CD8-positive, alpha-beta memory T cell (primary cell): ENCODE measurements at regions of chr20 and their contacts with region 1.

Region 1: DNA sequence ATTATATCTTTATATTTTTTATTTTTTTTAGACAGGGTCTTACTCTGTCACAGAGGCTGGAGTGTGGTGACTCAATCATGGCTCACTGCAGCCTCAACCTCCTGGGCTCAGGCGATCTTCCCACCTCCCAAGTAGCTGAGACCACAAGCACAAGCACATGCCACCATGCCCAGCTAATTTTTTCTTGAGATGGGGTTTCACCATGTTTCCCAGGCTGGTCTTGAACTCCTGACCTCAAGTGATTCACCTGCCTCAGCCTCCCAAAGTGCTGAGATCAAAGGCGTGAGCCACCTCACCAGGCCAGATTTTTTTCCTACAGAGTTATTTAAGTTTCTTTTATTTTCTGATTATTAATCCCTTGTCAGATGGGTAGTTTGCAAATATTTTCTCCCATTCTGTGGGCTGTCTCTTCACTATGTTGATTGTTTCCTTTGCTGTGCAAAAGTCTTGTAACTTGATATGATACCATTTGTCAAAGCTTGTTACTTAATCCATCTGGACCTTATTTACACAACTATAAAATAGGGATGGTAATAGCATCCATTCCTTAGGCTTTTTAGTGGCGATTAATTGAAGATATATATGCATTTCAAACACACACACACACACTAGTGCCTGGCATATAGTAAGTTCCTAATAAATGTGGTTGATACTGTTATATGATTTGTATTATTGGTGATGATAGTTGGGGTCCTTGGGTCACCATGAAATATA is 187.1 kb downstream of the BCAS1 start:
- DNase-seq: no peak
- H3K4me3 ChIP-seq: no peak overlapping the region
- H3K4me3 Mint-ChIP-seq: no peak overlapping the region
- H3K27ac ChIP-seq: no peak overlapping the region
- H3K27ac Mint-ChIP-seq: peak overlapping the region in 3 of 8 donors; percentile 7 to 54 (median 14)
- H3K4me1 ChIP-seq: peaks cover 16% of the 10 kb centered on the region
- H3K4me1 Mint-ChIP-seq: peaks cover 15 to 66% (median 60%) of the 10 kb centered on the region in 3 donors
- H3K27me3 ChIP-seq: no peaks in the 10 kb centered on the region
- H3K27me3 Mint-ChIP-seq: no peaks in the 10 kb centered on the region

Region 2: GRCh38 chr20:53872561-53873229 is 10.6 kb before region 1 on chr20:
- CTCF ChIA-PET with region 1: interaction called, 7 read pairs
- POLR2A ChIA-PET with region 1: interaction called, 12 read pairs
- DNase-seq: peak; percentile 24 to 75 (median 74)
- H3K4me3 ChIP-seq: peak overlapping the region; percentile 59
- H3K4me3 Mint-ChIP-seq: peak overlapping the region; percentile 79 to 92 (median 88)
- H3K27ac ChIP-seq: peak overlapping the region; percentile 62
- H3K27ac Mint-ChIP-seq: peak overlapping the region; percentile 90 to 99 (median 97)
- H3K4me1 ChIP-seq: peaks cover 55% of the 10 kb centered on the region
- H3K4me1 Mint-ChIP-seq: peaks cover 48 to 73% (median 68%) of the 10 kb centered on the region in 3 donors
- H3K27me3 ChIP-seq: no peaks in the 10 kb centered on the region
- H3K27me3 Mint-ChIP-seq: peaks cover 0 to 4% of the 10 kb centered on the region in 2 donors

Region 3: DNA sequence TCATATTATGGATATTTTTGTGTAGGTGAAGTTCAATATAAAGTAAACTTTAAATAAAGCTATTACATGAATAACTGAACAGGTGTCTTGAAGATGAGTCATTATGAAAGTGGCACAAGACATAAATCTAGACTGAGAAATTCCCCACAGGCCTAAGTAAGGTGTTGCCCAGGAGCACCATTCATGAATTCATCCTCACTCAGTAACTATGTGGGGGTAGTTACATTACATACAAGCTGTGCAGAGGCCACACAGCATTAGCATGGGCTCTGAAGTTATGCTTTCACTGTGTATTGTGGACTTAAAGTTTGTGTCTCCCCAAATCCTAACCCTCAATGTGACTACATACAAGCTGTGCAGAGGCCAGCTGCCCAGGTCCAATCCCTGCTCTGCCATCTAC is 121.2 kb after region 1 on chr20:
- CTCF ChIA-PET with region 1: no interaction called
- POLR2A ChIA-PET with region 1: no interaction called
- DNase-seq: no peak
- H3K4me3 ChIP-seq: no peak overlapping the region
- H3K4me3 Mint-ChIP-seq: no peak overlapping the region
- H3K27ac ChIP-seq: no peak overlapping the region
- H3K27ac Mint-ChIP-seq: no peak overlapping the region
- H3K4me1 ChIP-seq: no peaks in the 10 kb centered on the region
- H3K4me1 Mint-ChIP-seq: no peaks in the 10 kb centered on the region
- H3K27me3 ChIP-seq: no peaks in the 10 kb centered on the region
- H3K27me3 Mint-ChIP-seq: peaks cover 15 to 44% of the 10 kb centered on the region in 2 donors

Region 4: DNA sequence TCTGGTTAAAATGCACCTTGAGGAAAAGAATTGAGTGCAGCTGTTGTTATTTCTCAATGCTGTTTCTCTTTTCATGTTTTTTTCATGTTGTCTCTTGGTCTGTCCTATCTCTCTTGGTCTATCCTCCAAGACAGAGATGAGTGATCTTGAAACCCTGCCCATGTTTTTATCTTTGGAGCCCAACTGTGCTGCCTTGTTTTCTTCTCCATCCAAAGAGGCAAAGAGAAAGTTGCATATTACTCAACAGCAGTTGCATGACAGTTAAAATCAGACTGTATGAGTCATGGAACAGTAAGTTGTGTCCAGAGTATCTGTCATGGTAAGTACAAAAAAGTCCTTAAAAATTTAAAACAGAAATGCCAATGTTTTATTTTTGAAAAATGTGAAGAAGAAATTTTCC is 160.9 kb after region 1 on chr20:
- CTCF ChIA-PET with region 1: no interaction called
- POLR2A ChIA-PET with region 1: no interaction called
- DNase-seq: no peak
- H3K4me3 ChIP-seq: no peak overlapping the region
- H3K4me3 Mint-ChIP-seq: no peak overlapping the region
- H3K27ac ChIP-seq: no peak overlapping the region
- H3K27ac Mint-ChIP-seq: no peak overlapping the region
- H3K4me1 ChIP-seq: no peaks in the 10 kb centered on the region
- H3K4me1 Mint-ChIP-seq: peaks cover 2 to 9% (median 9%) of the 10 kb centered on the region in 3 donors
- H3K27me3 ChIP-seq: no peaks in the 10 kb centered on the region
- H3K27me3 Mint-ChIP-seq: peaks cover 4 to 6% of the 10 kb centered on the region in 2 donors